Activated B cell treated with CpG ODN at 0.5 μM for 24 hours (primary cell): ENCODE measurements at regions of chr20 and their contacts with region 1.

Region 1: DNA sequence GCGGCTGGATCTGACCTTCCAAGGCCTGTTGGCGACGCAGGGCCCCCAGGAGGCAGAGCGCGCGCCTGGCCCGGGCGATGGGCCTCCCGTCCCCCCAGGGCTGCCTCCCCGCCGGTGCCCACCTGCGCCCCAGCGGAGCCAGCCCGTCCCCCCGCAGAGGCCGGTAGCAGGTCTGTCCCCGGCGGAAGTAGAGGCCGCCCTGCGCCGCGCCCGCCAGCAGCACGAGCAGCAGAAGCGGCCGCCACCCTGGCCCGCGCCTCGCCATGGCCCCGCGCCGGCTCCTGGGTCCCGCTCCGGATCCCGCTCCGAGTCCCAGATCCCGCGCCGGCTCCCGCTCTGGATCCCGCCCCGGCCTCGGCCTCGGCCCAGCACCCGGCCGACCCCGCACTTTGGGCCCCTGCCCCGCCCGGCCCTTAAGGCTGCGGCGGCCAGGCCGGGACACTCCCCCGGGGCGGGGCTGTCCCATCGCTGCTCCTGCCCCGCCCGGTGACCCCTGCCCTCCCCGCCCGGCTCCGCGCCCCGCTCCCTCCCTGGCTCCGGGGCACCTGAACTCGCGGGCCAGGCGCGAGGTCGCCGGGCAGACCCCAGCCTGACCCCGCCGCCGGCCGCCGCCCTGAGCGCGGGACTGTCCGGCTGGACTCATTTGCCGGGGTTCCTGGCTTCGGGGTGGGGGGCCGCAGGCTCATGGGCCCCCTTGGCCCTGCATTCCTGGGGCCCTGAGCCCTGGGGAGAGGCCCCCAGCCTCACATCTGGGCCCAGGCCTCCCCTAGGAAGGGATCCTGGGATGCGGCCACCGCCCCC is at the start of gene CTSZ:
- DNase-seq: peak; percentile 65
- ATAC-seq: peak; percentile 25
- H3K4me3 Mint-ChIP-seq: peak within 1 kb of the TSS; percentile 95
- H3K27ac Mint-ChIP-seq: peak within 1 kb of the TSS; percentile 99
- H3K4me1 Mint-ChIP-seq: peaks cover 61% of the 10 kb centered on the region
- H3K27me3 Mint-ChIP-seq: no peaks in the 10 kb centered on the region
- CTCF ChIP-seq: no peak
- total RNA-seq, gene CTSZ: 262 and 278 TPM in 2 replicates

Region 2: DNA sequence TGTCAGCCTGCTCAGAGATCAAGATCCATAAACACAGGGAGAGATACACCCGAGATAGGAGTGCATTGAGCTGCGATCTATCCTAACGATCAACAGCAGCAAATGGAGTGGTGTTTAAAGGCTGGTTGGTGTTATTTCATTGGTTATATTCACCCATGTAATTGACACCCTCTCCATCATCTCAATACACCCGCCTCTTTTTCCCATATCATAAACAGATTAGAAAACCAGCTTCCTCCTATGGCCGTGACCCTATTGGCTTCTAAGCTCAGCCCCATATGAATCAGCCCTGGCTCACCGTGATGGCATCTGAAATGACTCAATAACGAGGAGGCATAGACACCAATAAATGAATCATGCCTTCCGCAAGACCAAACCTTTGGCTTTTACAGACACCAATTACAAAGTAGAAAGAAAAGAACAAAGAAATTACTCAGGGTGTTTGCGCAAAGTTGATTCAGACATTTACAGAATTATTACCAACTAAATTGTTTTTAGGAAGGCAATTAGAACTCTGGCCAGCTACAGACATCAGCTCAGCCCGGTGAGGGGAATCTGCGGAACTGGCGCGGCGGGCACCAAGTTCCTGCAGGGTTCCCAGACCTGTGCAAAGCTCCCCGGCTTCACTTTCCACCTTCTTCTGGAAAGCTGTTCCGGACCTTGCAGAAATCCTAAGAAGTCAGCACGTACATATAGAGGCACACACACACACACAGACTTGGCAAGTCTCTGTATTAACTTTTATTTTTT is 1308.8 kb before region 1 on chr20:
- CTCF ChIA-PET with region 1: no interaction called
- POLR2A ChIA-PET with region 1: no interaction called
- intact Hi-C with region 1: no loop called
- DNase-seq: no peak
- ATAC-seq: peak; percentile 35
- H3K4me3 Mint-ChIP-seq: peak overlapping the region; percentile 76
- H3K27ac Mint-ChIP-seq: peak overlapping the region; percentile 92
- H3K4me1 Mint-ChIP-seq: peaks cover 97% of the 10 kb centered on the region
- H3K27me3 Mint-ChIP-seq: no peaks in the 10 kb centered on the region
- CTCF ChIP-seq: no peak

Region 3: DNA sequence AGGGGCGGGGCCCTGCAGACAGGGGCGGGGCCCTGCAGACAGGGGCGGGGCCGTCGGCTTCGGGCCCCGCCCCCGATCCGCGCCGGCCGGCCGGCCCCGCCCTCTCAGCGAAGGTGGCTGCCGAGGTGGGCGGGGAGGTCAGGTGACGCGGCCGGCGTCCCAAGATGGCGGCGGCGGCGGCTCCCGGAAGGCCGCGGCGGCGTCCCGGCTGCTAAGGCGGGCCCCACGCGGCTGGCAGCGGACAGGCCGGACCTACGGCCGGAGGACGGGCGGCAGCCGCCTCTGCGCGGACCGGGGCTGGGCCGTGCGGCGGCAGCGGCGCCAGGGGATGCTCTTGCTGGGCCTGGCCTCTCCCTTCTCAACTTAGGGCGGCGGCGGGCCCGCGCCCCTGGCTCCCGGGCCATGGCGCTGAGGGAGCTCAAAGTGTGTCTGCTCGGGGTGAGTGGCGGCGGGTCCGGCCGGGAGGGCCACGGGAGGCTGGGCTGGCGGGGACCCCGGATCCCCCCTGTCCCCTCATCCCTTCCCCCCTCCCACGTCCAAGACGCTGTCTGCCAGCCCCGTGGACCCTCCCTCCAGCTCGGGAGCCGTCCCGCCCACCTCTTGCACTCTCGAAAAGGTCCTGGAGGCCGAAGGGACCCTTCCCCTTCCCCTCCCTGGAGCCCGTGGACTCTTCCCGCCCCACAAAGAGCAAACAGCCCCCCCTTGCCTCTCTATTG is 697.3 kb before region 1 on chr20 and contains the start of gene RAB22A:
- CTCF ChIA-PET with region 1: no interaction called
- POLR2A ChIA-PET with region 1: no interaction called
- intact Hi-C with region 1: loop called (anchors 10 kb)
- DNase-seq: peak; percentile 85
- ATAC-seq: peak; percentile 61
- H3K4me3 Mint-ChIP-seq: peak within 1 kb of the TSS; percentile 94
- H3K27ac Mint-ChIP-seq: peak within 1 kb of the TSS; percentile 94
- H3K4me1 Mint-ChIP-seq: peaks cover 58% of the 10 kb centered on the region
- H3K27me3 Mint-ChIP-seq: no peaks in the 10 kb centered on the region
- CTCF ChIP-seq: no peak
- total RNA-seq, gene RAB22A: 14.4 and 15.7 TPM in 2 replicates

Region 4: GRCh38 chr20:58888521-58889333 is 118.3 kb before region 1 on chr20:
- CTCF ChIA-PET with region 1: no interaction called
- POLR2A ChIA-PET with region 1: interaction called, 22 read pairs
- intact Hi-C with region 1: loop called (anchors 1 kb)
- DNase-seq: peak; percentile 73
- ATAC-seq: peak; percentile 45
- H3K4me3 Mint-ChIP-seq: peak overlapping the region; percentile 84
- H3K27ac Mint-ChIP-seq: peak overlapping the region; percentile 59
- H3K4me1 Mint-ChIP-seq: peaks cover 27% of the 10 kb centered on the region
- H3K27me3 Mint-ChIP-seq: no peaks in the 10 kb centered on the region
- CTCF ChIP-seq: no peak

Region 5: DNA sequence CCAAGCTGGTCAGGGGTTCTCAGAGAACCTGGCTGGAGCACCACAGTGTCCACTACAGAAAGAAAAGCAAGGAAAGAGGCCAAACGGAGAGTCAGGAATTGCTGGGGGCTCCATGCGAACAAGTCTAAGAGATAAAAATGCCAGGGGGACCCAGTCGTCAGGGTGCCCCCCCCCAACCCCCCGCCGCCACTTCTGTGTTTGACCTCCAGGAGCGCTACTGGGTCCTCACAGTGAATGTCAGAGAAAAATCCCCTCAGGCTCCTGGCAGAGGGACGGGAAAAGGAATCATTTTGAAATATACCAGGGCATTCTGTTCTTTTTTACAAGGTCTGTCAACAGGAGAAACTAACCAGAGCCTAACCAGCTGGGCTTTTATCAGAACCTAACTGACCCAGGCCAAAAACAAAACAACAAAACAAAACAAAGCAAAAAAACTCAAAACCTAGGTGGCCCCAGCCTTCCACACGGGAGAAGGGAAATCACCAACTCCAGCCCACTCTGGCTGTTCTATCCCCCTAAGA is 43.9 kb before region 1 on chr20:
- CTCF ChIA-PET with region 1: no interaction called
- POLR2A ChIA-PET with region 1: no interaction called
- intact Hi-C with region 1: no loop called
- DNase-seq: no peak
- ATAC-seq: no peak
- H3K4me3 Mint-ChIP-seq: no peak overlapping the region
- H3K27ac Mint-ChIP-seq: no peak overlapping the region
- H3K4me1 Mint-ChIP-seq: no peaks in the 10 kb centered on the region
- H3K27me3 Mint-ChIP-seq: no peaks in the 10 kb centered on the region
- CTCF ChIP-seq: no peak

Region 6: DNA sequence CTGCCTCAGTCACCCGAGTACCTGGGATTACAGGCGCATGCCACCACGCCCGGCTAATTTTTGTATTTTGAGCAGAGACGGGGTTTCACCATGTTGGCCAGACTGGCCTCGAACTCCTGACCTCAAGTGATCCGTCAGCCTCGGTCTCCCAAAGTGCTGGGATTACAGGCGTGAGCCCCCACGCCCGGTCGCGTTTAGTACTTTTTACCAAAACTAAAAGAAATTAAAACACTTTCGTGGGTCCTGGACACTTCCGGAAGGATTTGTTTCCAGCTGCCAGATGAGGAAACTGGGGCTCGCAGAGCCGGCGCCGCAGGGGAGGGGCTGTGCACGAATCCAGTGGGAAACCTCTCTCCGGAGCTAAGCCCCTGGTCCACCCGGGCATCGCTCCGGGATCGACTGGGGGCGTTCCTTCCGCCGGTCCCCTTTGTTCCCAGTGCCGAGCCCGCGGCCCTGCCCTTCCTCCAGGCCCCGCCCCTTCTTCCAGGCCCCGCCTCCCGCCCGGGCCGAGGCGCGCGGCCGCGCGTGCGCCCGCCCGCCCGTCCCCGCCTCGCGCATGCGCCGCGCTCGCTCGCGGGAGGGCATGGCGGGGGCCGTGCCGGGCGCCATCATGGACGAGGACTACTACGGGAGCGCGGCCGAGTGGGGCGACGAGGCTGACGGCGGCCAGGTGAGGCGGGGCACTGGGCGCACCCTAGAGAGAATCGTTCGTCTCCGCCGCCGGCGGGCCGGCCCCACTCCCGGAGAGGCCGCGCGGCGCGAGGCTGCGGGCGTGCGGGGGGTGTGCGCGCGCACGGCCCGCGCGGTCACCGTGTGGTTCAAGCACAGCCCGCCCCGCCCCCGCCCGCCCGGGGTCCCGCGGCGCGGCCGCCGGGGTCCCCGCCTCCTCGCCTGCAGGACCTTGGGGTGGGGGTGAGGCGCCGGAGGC is 26.1 kb before region 1 on chr20 and contains the start of gene NELFCD:
- CTCF ChIA-PET with region 1: no interaction called
- POLR2A ChIA-PET with region 1: interaction called, 14 read pairs
- intact Hi-C with region 1: loop called (anchors 1 kb)
- DNase-seq: peak; percentile 95
- ATAC-seq: peak; percentile 89
- H3K4me3 Mint-ChIP-seq: peak within 1 kb of the TSS; percentile 91
- H3K27ac Mint-ChIP-seq: peak within 1 kb of the TSS; percentile 80
- H3K4me1 Mint-ChIP-seq: peaks cover 45% of the 10 kb centered on the region
- H3K27me3 Mint-ChIP-seq: no peaks in the 10 kb centered on the region
- CTCF ChIP-seq: no peak
- total RNA-seq, gene NELFCD: 97.2 and 107 TPM in 2 replicates

Region 7: GRCh38 chr20:59032023-59032712 is 25.1 kb after region 1 on chr20 and contains the start of gene ATP5F1E:
- CTCF ChIA-PET with region 1: interaction called, 5 read pairs
- POLR2A ChIA-PET with region 1: interaction called, 89 read pairs
- intact Hi-C with region 1: loop called (anchors 1 kb)
- DNase-seq: peak; percentile 98
- ATAC-seq: peak; percentile 96
- H3K4me3 Mint-ChIP-seq: peak within 1 kb of the TSS; percentile 96
- H3K27ac Mint-ChIP-seq: peak within 1 kb of the TSS; percentile 95
- H3K4me1 Mint-ChIP-seq: peaks cover 50% of the 10 kb centered on the region
- H3K27me3 Mint-ChIP-seq: no peaks in the 10 kb centered on the region
- CTCF ChIP-seq: no peak
- total RNA-seq, gene ATP5F1E: 84.0 and 86.1 TPM in 2 replicates

Region 8: GRCh38 chr20:59120491-59120890 is 113.4 kb after region 1 on chr20:
- CTCF ChIA-PET with region 1: no interaction called
- POLR2A ChIA-PET with region 1: interaction called, 25 read pairs
- intact Hi-C with region 1: loop called (anchors 2 kb)
- DNase-seq: no peak
- ATAC-seq: no peak
- H3K4me3 Mint-ChIP-seq: peak overlapping the region; percentile 54
- H3K27ac Mint-ChIP-seq: peak overlapping the region; percentile 99
- H3K4me1 Mint-ChIP-seq: peaks cover 68% of the 10 kb centered on the region
- H3K27me3 Mint-ChIP-seq: no peaks in the 10 kb centered on the region
- CTCF ChIP-seq: no peak